ENCODE measurements at regions of chr9 and their contacts with region 1.

Region 1: DNA sequence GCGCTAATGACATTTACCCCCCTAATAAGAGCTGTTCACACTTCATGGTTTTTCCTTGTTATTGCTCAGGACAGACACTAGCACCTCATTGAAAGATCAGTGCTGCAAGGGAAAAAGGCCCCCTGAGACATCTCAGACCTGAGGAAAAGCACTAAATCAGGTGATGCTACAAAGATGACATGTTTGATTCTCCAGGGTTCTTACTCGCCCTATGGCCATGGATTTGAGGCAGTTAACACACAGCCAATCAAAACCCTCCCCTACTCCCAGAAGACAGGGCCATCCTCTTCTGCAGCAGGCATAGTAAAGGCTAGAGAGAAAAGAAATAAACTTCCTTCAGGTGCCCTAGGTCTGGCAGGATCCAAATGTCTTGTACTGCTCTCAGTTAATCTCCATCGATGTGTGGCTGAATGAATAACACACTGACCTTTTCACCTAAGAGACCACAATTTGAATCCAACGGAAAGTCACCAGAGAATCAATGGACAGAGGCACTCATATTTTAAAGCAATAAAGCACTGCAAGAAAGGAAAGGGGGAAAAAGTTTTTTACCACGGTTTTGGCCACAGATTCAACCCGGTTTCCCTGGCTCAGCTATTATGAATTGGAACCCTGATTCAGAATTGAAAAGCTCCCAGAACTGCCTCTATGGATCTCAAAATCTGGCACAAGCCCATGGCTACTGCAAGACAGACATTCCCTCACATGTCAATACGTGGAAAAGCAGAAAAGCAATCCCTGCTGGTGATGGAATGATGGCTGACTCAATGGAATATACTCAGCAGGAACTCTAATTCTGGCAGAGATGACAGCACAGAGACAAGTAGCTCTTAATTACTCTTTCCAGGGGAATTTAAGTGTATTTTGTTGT is 329.5 kb downstream of the BNC2 start:
- H3K4me3 Mint-ChIP-seq: no peak overlapping the region
- H3K27ac Mint-ChIP-seq: no peak overlapping the region
- H3K4me1 Mint-ChIP-seq: no peaks in the 10 kb centered on the region
- H3K27me3 Mint-ChIP-seq: no peaks in the 10 kb centered on the region

Region 2: GRCh38 chr9:16601991-16602390 is 61.0 kb after region 1 on chr9:
- intact Hi-C with region 1: loop called (anchors 10 kb)
- H3K4me3 Mint-ChIP-seq: no peak overlapping the region
- H3K27ac Mint-ChIP-seq: no peak overlapping the region
- H3K4me1 Mint-ChIP-seq: no peaks in the 10 kb centered on the region
- H3K27me3 Mint-ChIP-seq: no peaks in the 10 kb centered on the region

Region 3: DNA sequence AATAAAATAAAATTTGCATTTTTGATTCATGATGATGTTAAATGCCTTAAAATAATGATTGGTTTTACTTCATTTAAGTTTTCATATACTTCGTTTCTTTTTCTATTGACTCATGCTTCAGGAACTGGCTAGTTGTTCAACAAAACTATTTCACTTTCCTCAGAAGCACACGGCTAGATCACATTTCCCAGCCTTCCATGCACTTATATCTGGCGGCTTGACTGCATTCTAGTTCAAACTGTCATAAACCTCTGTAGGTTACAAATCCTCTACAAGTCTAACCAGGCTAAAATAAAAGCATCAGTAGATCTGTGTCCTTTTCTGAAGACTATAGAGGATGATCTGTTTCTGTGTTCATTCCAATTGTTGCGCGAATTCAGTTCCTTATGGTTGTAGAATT is 547.6 kb after region 1 on chr9:
- intact Hi-C with region 1: no loop called
- H3K4me3 Mint-ChIP-seq: no peak overlapping the region
- H3K27ac Mint-ChIP-seq: no peak overlapping the region
- H3K4me1 Mint-ChIP-seq: no peaks in the 10 kb centered on the region
- H3K27me3 Mint-ChIP-seq: peaks cover 2% of the 10 kb centered on the region